ENCODE measurements at regions of chr22 and their contacts with region 1.

Region 1: GRCh38 chr22:39532215-39533071 is at the start of gene RPS19BP1:
- DNase-seq: peak; percentile 94
- ATAC-seq: peak; percentile 85
- H3K4me3 Mint-ChIP-seq: peak within 1 kb of the TSS; percentile 96
- H3K27ac Mint-ChIP-seq: peak within 1 kb of the TSS; percentile 94
- H3K4me1 Mint-ChIP-seq: peaks cover 56% of the 10 kb centered on the region
- H3K27me3 Mint-ChIP-seq: no peaks in the 10 kb centered on the region
- CTCF ChIP-seq: no peak
- total RNA-seq, gene RPS19BP1: 67.7 and 79.0 TPM in 2 replicates

Region 2: DNA sequence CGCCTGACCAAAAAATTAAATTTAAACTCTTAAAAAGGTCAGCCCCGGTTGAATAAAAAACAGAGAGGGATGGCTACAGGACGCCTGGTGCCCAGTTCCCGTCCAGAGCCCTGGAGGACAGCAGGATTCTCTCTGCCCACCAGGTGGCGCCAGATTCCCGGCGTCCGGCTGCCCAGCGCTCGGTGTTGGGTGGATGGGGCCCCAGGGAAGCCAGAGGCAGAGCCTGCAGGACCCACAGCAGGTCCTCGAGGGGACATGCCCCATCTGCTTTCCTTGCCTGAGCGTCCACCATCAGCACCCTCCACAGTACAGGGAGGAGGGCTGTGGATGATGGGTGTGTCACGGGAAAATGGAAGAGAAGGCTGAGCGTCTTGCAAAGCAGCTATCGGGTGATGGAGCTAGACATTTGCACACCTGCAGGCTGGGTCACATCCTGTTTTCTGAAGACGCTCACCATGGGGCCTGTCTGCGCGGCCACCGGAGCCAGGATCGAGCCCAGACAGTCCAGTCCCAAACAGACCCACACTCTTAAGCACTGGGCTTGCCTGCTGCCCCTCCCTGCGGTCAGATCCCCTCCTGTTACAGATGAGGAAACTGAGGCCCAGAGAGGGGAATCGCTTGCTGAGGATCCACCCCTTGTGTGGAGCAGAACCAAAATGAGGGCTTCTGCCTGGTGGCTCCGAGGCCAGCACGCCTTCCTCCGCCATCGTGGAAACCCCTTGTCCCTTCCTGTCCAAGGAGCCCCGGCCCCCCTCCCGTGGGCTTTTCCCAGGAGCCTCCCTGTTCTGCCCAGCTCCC is 361.4 kb before region 1 on chr22:
- CTCF ChIA-PET with region 1: interaction called, 31 read pairs
- POLR2A ChIA-PET with region 1: interaction called, 15 read pairs
- intact Hi-C with region 1: loop called (anchors 1 kb)
- DNase-seq: peak; percentile 85
- ATAC-seq: peak; percentile 83
- H3K4me3 Mint-ChIP-seq: peak overlapping the region; percentile 77
- H3K27ac Mint-ChIP-seq: peak overlapping the region; percentile 76
- H3K4me1 Mint-ChIP-seq: peaks cover 42% of the 10 kb centered on the region
- H3K27me3 Mint-ChIP-seq: no peaks in the 10 kb centered on the region
- CTCF ChIP-seq: peak; percentile 93

Region 3: DNA sequence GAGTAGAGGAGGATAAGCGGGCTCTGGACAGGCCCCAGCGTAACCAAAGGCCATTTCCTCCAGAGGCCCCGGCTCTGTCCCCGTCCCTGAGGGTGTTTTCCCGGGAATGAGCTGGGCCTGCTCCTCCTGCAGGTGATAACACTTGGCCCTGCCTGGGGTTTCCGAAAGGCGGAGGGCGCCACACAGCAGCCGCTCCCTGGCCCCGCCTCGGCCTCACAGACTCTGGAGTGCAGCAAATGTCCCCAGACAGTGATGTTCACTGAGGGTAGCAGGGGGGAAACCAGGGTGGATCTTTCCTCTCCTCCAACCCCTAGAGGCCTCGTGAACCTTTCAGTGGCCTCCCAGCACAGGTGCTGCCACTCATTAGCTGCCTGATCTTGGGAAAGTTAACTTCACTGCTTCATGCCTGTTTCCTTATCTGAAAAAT is 86.1 kb before region 1 on chr22:
- CTCF ChIA-PET with region 1: interaction called, 12 read pairs
- POLR2A ChIA-PET with region 1: interaction called, 3 read pairs
- intact Hi-C with region 1: no loop called
- DNase-seq: peak; percentile 51
- ATAC-seq: peak; percentile 61
- H3K4me3 Mint-ChIP-seq: peak overlapping the region; percentile 86
- H3K27ac Mint-ChIP-seq: peak overlapping the region; percentile 90
- H3K4me1 Mint-ChIP-seq: peaks cover 90% of the 10 kb centered on the region
- H3K27me3 Mint-ChIP-seq: no peaks in the 10 kb centered on the region
- CTCF ChIP-seq: no peak

Region 4: GRCh38 chr22:39482768-39483167 is 49.7 kb before region 1 on chr22:
- CTCF ChIA-PET with region 1: no interaction called
- POLR2A ChIA-PET with region 1: no interaction called
- intact Hi-C with region 1: no loop called
- DNase-seq: no peak
- ATAC-seq: no peak
- H3K4me3 Mint-ChIP-seq: no peak overlapping the region
- H3K27ac Mint-ChIP-seq: no peak overlapping the region
- H3K4me1 Mint-ChIP-seq: no peaks in the 10 kb centered on the region
- H3K27me3 Mint-ChIP-seq: no peaks in the 10 kb centered on the region
- CTCF ChIP-seq: no peak

Region 5: GRCh38 chr22:39514373-39514973 is 18.0 kb before region 1 on chr22:
- CTCF ChIA-PET with region 1: interaction called, 23 read pairs
- POLR2A ChIA-PET with region 1: interaction called, 111 read pairs
- intact Hi-C with region 1: no loop called
- DNase-seq: no peak
- ATAC-seq: peak; percentile 45
- H3K4me3 Mint-ChIP-seq: no peak overlapping the region
- H3K27ac Mint-ChIP-seq: peak overlapping the region; percentile 24
- H3K4me1 Mint-ChIP-seq: peaks cover 28% of the 10 kb centered on the region
- H3K27me3 Mint-ChIP-seq: no peaks in the 10 kb centered on the region
- CTCF ChIP-seq: no peak

Region 6: DNA sequence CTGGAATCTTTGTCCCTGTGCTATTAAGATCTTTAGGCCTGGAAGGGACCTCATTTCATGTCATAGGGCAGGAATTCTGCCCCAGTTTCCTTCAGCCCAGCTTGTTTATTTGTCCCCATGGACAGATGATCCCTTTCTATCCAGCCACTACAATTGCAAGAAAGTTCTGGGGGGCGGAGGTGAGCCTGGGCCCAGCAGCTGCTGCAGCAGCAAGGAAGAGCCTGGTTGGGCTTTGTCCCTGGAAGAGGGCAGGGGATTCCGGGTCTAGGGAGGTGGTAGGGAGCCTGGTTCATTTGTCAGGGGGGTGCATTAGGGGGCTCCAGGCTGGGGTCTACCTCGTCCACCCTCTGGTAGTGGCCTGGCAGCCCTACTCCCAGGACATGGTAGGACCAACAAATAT is 21.7 kb after region 1 on chr22:
- CTCF ChIA-PET with region 1: no interaction called
- POLR2A ChIA-PET with region 1: no interaction called
- intact Hi-C with region 1: no loop called
- DNase-seq: no peak
- ATAC-seq: no peak
- H3K4me3 Mint-ChIP-seq: no peak overlapping the region
- H3K27ac Mint-ChIP-seq: no peak overlapping the region
- H3K4me1 Mint-ChIP-seq: peaks cover 9% of the 10 kb centered on the region
- H3K27me3 Mint-ChIP-seq: peaks cover 52% of the 10 kb centered on the region
- CTCF ChIP-seq: no peak

Region 7: DNA sequence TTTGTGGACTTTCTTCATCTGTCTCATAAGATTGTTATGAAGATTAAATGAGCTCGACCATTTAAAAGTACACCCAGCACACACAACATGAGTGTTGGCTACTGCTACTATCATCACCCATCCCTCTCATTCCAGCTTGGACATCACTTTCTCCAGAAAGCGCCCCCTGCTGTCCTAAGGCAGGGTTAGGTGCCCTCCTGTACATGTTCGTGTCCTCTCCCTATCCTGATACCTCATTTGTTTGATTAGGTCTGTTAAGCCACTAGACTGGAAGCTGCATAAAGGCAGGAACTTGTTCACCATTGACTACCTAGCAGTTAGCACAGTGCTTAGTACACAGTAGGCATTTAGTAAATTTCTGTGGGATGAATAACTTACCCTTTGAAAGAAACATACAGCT is 275.6 kb after region 1 on chr22:
- CTCF ChIA-PET with region 1: no interaction called
- POLR2A ChIA-PET with region 1: no interaction called
- intact Hi-C with region 1: no loop called
- DNase-seq: no peak
- ATAC-seq: no peak
- H3K4me3 Mint-ChIP-seq: no peak overlapping the region
- H3K27ac Mint-ChIP-seq: no peak overlapping the region
- H3K4me1 Mint-ChIP-seq: peaks cover 14% of the 10 kb centered on the region
- H3K27me3 Mint-ChIP-seq: peaks cover 7% of the 10 kb centered on the region
- CTCF ChIP-seq: no peak

Region 8: GRCh38 chr22:39917776-39918495 is 385.5 kb after region 1 on chr22:
- CTCF ChIA-PET with region 1: no interaction called
- POLR2A ChIA-PET with region 1: no interaction called
- intact Hi-C with region 1: no loop called
- DNase-seq: no peak
- ATAC-seq: no peak
- H3K4me3 Mint-ChIP-seq: no peak overlapping the region
- H3K27ac Mint-ChIP-seq: no peak overlapping the region
- H3K4me1 Mint-ChIP-seq: peaks cover 38% of the 10 kb centered on the region
- H3K27me3 Mint-ChIP-seq: no peaks in the 10 kb centered on the region
- CTCF ChIP-seq: no peak

Region 9: GRCh38 chr22:40036591-40037225 is 504.3 kb after region 1 on chr22:
- CTCF ChIA-PET with region 1: interaction called, 57 read pairs
- POLR2A ChIA-PET with region 1: interaction called, 3 read pairs
- intact Hi-C with region 1: loop called (anchors 1 kb)
- DNase-seq: peak; percentile 43
- ATAC-seq: peak; percentile 95
- H3K4me3 Mint-ChIP-seq: no peak overlapping the region
- H3K27ac Mint-ChIP-seq: no peak overlapping the region
- H3K4me1 Mint-ChIP-seq: no peaks in the 10 kb centered on the region
- H3K27me3 Mint-ChIP-seq: peaks cover 19% of the 10 kb centered on the region
- CTCF ChIP-seq: no peak

Region 10: DNA sequence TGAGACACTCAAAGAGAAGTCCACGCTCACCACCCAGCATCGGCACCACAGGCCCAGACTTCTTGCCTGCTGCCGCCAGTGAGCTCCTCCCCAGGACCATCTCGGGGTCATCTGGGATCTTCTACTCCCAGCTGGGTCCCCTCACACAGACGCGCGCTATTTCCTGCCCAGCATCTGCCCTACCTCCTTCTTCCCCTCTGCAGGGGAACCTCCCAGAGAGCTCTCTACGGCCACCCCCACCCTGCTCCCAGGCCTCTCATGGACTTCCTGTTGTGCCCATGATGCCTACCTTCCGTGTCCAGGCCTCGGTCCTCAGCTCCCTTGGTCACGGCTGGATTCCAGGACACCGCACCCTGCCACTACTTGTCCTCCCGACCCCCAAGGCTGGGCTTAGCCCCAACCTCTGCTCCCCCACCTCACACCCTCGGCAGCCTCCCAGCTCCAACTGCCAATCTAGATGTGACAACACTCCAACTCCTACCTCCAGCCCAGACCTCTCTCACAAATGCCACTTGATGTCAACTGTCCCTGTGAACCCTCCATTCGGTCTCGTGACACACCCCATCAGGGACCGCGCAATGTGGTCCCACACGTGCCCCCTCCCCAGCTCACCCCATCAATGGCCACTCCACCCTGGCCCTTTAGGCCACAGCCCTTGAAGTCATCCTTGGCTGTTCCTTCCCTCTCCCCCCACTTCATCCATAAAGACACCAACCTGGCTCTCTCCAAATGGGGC is 883.3 kb after region 1 on chr22:
- CTCF ChIA-PET with region 1: no interaction called
- POLR2A ChIA-PET with region 1: no interaction called
- intact Hi-C with region 1: loop called (anchors 5 kb)
- DNase-seq: no peak
- ATAC-seq: peak; percentile 48
- H3K4me3 Mint-ChIP-seq: peak overlapping the region; percentile 75
- H3K27ac Mint-ChIP-seq: peak overlapping the region; percentile 91
- H3K4me1 Mint-ChIP-seq: peaks cover 80% of the 10 kb centered on the region
- H3K27me3 Mint-ChIP-seq: no peaks in the 10 kb centered on the region
- CTCF ChIP-seq: no peak

Measured in activated B cell treated with CpG ODN at 0.5 μM for 24 hours (primary cell).